Dendritic cell treated with granulocyte-macrophage colony-stimulating factor and Interleukin-4, amounts not matched to agents 40 ng/mL and 50 ng/mL, for 4 days (primary cell): ENCODE measurements at regions of chr7 and their contacts with region 1.

Region 1: GRCh38 chr7:18345641-18346234 is 149.8 kb upstream of the HDAC9 start:
- H3K4me3 Mint-ChIP-seq: no peak overlapping the region
- H3K27ac Mint-ChIP-seq: no peak overlapping the region
- H3K4me1 Mint-ChIP-seq: peaks cover 7% of the 10 kb centered on the region
- H3K27me3 Mint-ChIP-seq: no peaks in the 10 kb centered on the region

Region 2: GRCh38 chr7:17680943-17681351 is 664.8 kb before region 1 on chr7:
- intact Hi-C with region 1: loop called (anchors 2 kb)
- H3K4me3 Mint-ChIP-seq: no peak overlapping the region
- H3K27ac Mint-ChIP-seq: peak overlapping the region; percentile 82
- H3K4me1 Mint-ChIP-seq: peaks cover 26% of the 10 kb centered on the region
- H3K27me3 Mint-ChIP-seq: no peaks in the 10 kb centered on the region

Region 3: DNA sequence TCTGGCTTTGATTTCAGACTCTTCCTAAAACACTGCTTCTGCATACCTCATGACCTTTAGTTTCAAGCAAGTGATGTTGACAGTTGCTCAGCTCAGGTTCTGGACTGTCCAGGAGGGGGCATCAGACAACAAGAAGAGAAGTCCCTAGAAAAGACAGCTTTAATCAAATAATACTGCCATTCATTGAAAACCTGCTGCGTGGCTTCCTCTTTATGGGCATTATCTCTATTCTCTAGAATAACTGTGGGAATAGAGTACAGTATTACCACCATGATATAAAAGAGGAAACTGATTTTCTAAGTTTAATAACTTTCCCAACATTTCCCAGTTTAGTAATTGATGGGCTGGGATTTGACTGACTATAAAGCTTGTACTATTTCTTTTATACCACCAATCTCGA is 575.8 kb before region 1 on chr7:
- intact Hi-C with region 1: loop called (anchors 5 kb)
- H3K4me3 Mint-ChIP-seq: no peak overlapping the region
- H3K27ac Mint-ChIP-seq: peak overlapping the region; percentile 59
- H3K4me1 Mint-ChIP-seq: peaks cover 37% of the 10 kb centered on the region
- H3K27me3 Mint-ChIP-seq: no peaks in the 10 kb centered on the region

Region 4: GRCh38 chr7:18064242-18064838 is 281.4 kb before region 1 on chr7:
- intact Hi-C with region 1: loop called (anchors 1 kb)
- H3K4me3 Mint-ChIP-seq: no peak overlapping the region
- H3K27ac Mint-ChIP-seq: no peak overlapping the region
- H3K4me1 Mint-ChIP-seq: no peaks in the 10 kb centered on the region
- H3K27me3 Mint-ChIP-seq: no peaks in the 10 kb centered on the region

Region 5: GRCh38 chr7:18212758-18213157 is 133.0 kb before region 1 on chr7:
- intact Hi-C with region 1: loop called (anchors 5 kb)
- H3K4me3 Mint-ChIP-seq: no peak overlapping the region
- H3K27ac Mint-ChIP-seq: no peak overlapping the region
- H3K4me1 Mint-ChIP-seq: peaks cover 24% of the 10 kb centered on the region
- H3K27me3 Mint-ChIP-seq: no peaks in the 10 kb centered on the region

Region 6: DNA sequence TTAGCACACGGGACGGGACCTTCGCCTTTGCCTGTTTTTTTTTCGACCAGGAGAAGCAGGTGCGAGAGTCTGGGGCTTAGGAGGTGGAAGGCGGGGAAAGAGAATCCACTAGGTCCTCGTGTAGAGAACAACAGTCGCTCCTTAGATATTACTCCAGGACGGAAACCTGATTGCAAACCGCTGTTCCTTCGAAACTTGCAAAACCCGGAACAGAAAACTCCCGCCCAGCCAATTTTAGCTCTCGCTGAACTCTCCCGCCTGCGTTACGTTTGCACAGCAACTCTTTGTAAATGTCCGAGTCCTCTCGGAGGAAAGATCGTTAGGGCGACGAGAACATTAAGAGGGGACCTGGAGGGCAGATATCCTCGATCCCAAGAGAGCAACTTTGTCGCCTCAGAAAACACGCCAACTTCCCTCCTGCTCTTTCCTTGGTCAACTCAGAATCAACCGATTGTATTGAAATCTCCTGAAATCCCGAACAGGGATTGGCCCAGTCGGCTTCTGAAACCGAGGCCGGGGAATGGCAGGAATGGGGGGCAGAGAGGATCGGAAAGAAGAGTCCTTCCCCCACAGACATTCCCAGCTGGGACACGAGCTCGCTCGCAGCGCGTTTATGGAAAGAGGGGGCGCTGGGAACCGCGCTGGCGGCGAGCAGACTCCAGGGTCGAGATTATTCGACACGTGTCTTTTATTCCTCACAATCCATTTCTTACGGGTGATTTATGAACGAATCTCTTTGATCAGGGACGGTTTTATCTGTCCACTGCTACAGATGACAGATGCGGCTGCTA is 761.8 kb after region 1 on chr7:
- intact Hi-C with region 1: loop called (anchors 10 kb)
- H3K4me3 Mint-ChIP-seq: peak overlapping the region; percentile 75
- H3K27ac Mint-ChIP-seq: no peak overlapping the region
- H3K4me1 Mint-ChIP-seq: peaks cover 43% of the 10 kb centered on the region
- H3K27me3 Mint-ChIP-seq: peaks cover 95% of the 10 kb centered on the region